GM13977 (cell line): ENCODE measurements at regions of chr1 and their contacts with region 1.

Region 1: DNA sequence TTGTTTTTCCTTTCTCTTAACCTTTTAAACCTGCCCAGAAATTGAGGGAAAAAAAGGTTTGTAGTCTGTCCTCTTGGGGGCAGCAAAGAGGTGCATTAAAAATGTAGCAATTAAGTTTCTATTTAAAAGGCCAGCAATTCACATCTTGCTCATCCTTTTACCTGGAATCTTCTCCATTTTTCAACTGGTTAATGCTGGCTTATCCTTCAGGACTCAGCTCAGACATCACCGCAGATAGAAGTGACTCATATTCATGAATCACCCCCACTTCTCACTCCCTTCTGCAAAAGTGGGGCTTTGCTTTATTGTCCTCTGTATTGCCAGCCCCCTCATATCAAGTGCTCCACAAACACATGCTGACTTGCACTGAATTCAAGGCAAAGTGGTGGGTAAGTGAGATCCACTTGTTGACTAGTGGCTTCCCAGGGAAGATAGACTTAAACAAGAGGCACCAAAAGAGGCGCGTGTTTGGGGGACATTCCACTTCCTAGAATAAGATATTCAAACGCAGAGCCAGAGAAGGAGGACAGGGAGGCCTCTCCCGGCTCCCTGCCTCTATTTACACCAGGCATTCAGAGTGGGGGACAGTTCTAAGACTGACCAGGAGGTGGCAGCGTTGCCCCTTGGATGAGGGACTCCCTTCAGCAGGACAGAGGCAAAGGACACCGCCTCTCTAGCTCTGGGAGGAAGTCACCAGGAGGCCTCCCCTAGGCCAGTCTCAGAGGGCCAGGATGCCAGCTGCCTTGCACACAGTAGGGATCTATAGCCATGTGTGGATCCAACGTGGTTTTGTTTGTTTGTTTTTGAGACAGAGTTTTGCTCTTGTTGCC is 23.2 kb upstream of the ZNF648 start:
- DNase-seq: peak; percentile 83
- CTCF ChIP-seq: peak; percentile 84

Region 2: GRCh38 chr1:181985936-181986906 is 98.5 kb before region 1 on chr1:
- in situ Hi-C with region 1: no loop called
- DNase-seq: no peak
- CTCF ChIP-seq: no peak

Region 3: DNA sequence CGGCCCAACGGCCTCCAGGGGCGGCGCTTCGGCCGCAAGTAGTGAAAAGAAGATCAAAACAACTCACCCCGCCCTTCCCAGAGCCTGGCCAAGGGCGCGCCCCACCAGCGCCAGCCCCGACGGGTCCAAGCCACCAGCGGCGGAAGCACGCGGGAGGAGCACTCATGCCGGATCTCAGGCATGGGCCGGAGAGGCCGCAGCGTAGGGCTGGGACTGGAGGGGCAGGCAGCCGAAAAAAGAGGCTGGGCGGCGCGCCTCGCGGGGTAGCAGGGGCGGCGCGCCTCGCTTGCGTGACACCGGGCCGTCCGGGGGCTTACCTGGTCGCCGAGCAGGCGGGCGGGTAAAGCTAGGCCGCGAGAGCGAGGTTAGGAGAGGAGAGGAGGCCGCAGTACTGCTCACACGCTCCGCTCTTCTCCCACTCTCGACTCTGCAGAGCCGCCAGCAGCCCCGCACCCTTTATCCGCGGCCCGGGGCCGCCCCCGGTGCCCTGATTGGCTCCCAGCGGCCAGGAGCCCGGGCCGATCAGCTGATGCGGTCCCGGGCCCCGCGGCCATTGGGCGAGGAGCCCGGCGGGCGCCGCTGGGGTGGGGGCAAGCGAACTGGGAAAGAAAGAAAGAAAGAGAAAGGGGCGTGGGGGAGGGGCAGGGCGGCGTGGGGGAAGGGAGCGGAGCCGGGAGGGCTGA is 306.8 kb after region 1 on chr1 and contains the start of gene GLUL:
- in situ Hi-C with region 1: loop called (anchors 10 kb)
- DNase-seq: peak; percentile 95
- CTCF ChIP-seq: no peak